OCI-LY7 (cell line): ENCODE measurements at regions of chr6 and their contacts with region 1.

Region 1: DNA sequence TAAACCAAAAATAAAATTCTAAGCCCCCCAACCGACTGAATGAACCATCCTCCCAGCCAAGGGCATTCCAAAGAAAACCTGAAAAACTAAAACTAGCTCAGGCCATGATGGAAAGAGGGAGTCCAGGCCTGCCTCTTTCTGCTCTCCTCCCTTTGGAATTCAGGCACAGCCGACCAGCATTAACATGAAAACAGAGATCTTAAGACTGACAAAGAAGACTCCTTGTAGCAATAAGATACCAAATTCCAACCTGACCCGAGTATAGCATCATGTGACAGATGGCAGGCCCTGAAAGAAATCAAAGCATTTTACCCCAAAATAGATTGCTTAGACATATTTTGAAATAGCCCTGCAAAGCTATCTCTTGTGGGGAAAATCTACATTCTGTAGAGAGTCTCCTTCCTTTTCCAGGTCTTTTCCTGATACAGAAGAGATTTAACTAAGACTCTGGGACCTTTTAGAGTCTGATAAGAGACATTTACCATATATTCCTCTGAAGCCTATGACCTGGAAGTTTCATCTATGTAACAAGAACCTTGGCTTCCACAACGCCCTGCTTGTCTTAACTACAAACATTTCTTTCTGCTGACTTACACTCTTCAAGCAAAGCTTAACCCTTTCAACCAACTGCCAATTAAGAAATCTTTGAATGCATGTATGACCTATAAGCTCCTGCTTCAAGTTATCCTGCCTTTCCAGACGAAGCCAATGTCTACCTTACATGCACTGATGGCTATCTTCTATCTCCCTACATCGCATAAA is 22.2 kb upstream of the TXLNB start:
- DNase-seq: no peak
- H3K4me3 ChIP-seq: no peak overlapping the region
- H3K27ac ChIP-seq: no peak overlapping the region
- H3K4me1 ChIP-seq: peaks cover 22% of the 10 kb centered on the region
- CTCF ChIP-seq: no peak

Region 2: GRCh38 chr6:139204978-139205377 is 109.0 kb before region 1 on chr6:
- CTCF ChIA-PET with region 1: no interaction called
- POLR2A ChIA-PET with region 1: no interaction called
- intact Hi-C with region 1: no loop called
- DNase-seq: no peak
- H3K4me3 ChIP-seq: no peak overlapping the region
- H3K27ac ChIP-seq: no peak overlapping the region
- H3K4me1 ChIP-seq: no peaks in the 10 kb centered on the region
- CTCF ChIP-seq: peak; percentile 28; the same call in 1 of the 2 replicates

Region 3: GRCh38 chr6:139303185-139303584 is 10.8 kb before region 1 on chr6:
- CTCF ChIA-PET with region 1: no interaction called
- POLR2A ChIA-PET with region 1: interaction called, 10 read pairs
- intact Hi-C with region 1: no loop called
- DNase-seq: no peak
- H3K4me3 ChIP-seq: no peak overlapping the region
- H3K27ac ChIP-seq: no peak overlapping the region
- H3K4me1 ChIP-seq: no peaks in the 10 kb centered on the region
- CTCF ChIP-seq: no peak

Region 4: GRCh38 chr6:139364302-139364981 is 50.5 kb after region 1 on chr6:
- CTCF ChIA-PET with region 1: no interaction called
- POLR2A ChIA-PET with region 1: no interaction called
- intact Hi-C with region 1: no loop called
- DNase-seq: peak; percentile 82
- H3K4me3 ChIP-seq: no peak overlapping the region
- H3K27ac ChIP-seq: peak overlapping the region; percentile 40
- H3K4me1 ChIP-seq: peaks cover 38% of the 10 kb centered on the region
- CTCF ChIP-seq: peak; percentile 92

Region 5: DNA sequence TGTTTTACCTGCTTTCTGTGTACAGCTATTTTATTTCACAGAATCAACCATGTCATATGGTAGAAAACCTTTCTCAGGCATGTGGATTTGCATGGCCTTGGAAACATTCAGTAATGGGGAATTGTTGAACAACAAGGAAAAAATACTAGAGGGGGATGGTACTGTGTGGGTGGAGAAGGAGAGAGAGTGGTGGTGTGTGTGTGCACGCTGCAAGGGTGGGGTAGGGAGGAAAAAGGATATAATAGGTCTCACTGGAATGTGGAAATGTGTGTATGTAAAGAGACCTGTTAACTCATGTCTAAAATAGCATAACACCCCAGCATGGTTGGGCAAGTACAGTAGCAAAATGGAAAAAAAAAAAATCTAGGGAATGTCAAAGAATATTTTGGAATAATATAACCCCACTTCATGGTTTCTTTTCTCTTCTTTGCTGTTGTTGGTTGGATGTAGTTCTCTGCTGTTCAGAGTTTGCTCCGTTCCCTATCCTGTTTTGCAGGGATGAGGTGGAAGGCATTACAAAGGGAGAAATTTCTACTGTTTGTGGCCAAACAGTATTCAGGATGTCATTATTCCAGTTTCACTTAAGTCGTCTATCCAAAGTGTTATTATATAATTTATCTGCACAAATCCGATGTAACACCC is 154.3 kb after region 1 on chr6:
- CTCF ChIA-PET with region 1: no interaction called
- POLR2A ChIA-PET with region 1: no interaction called
- intact Hi-C with region 1: no loop called
- DNase-seq: no peak
- H3K4me3 ChIP-seq: no peak overlapping the region
- H3K27ac ChIP-seq: no peak overlapping the region
- H3K4me1 ChIP-seq: no peaks in the 10 kb centered on the region
- CTCF ChIP-seq: no peak